ENCODE measurements at regions of chr13 and their contacts with region 1.

Region 1: DNA sequence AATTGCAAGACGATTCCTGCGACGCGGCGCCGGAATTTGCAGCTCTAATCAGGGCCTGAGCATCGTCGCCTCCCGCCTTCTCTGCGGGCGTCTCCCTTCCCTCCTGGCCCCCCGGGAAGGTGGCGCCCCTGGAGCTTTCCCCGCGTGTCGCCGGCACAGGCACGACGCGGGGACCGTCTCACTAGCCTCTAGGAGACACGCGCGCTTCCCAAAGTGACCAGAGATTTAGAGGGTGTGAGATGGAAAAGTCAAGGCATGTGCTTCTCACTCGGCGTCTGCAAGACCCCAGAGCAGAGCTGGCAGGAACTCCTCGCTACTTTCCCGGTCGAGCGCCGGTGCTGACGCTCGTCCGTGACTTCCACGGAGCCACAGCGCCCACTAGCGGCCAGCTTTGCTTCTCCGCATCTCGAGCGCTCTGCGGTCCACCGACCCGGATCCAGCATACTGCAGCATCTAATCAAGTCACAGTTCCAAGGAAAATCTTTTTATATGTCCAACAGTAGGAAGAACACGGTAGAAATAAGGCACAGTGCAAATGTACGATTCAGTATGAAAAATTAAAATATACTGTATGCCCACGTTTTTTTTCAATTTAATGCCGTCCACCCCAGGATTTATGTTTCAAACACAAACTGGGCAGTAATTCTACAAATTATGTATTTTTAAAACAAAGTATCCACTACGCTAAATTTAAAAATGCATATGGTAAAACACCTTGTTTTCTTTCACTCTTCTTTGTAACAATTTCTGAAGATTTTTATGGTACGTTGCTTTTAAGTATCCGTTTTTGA is 977 bp upstream of the EFNB2 start:
- DNase-seq: peak; percentile 94
- ATAC-seq: peak; percentile 17
- H3K4me3 Mint-ChIP-seq: peak overlapping the region; percentile 81
- H3K27ac Mint-ChIP-seq: peak overlapping the region; percentile 72; the same call in 1 of the 2 replicates
- H3K4me1 Mint-ChIP-seq: peaks cover 37% of the 10 kb centered on the region
- H3K27me3 Mint-ChIP-seq: peaks cover 10% of the 10 kb centered on the region
- CTCF ChIP-seq: peak; percentile 95

Region 2: GRCh38 chr13:106567474-106568298 is 31.2 kb after region 1 on chr13 and contains the start of gene ARGLU1:
- CTCF ChIA-PET with region 1: interaction called, 10 read pairs
- POLR2A ChIA-PET with region 1: interaction called, 9 read pairs
- DNase-seq: peak; percentile 95
- ATAC-seq: peak; percentile 62
- H3K4me3 Mint-ChIP-seq: peak within 1 kb of the TSS; percentile 99
- H3K27ac Mint-ChIP-seq: peak within 1 kb of the TSS; percentile 97
- H3K4me1 Mint-ChIP-seq: peaks cover 49% of the 10 kb centered on the region
- H3K27me3 Mint-ChIP-seq: no peaks in the 10 kb centered on the region
- CTCF ChIP-seq: no peak
- total RNA-seq, gene ARGLU1: 115 to 130 TPM (median 125 TPM) in 3 replicates

Region 3: GRCh38 chr13:106628936-106629659 is 92.7 kb after region 1 on chr13:
- CTCF ChIA-PET with region 1: no interaction called
- POLR2A ChIA-PET with region 1: no interaction called
- DNase-seq: no peak
- ATAC-seq: no peak
- H3K4me3 Mint-ChIP-seq: no peak overlapping the region
- H3K27ac Mint-ChIP-seq: no peak overlapping the region
- H3K4me1 Mint-ChIP-seq: 0 out of 2 replicates have a peak, but pooled peaks cover 3% of the 10 kb centered on the region
- H3K27me3 Mint-ChIP-seq: no peaks in the 10 kb centered on the region; the same call in 1 of the 2 replicates
- CTCF ChIP-seq: no peak

Measured in WTC11 (cell line).